HepG2 (cell line): ENCODE measurements at regions of chr1 and their contacts with region 1.

Region 1: DNA sequence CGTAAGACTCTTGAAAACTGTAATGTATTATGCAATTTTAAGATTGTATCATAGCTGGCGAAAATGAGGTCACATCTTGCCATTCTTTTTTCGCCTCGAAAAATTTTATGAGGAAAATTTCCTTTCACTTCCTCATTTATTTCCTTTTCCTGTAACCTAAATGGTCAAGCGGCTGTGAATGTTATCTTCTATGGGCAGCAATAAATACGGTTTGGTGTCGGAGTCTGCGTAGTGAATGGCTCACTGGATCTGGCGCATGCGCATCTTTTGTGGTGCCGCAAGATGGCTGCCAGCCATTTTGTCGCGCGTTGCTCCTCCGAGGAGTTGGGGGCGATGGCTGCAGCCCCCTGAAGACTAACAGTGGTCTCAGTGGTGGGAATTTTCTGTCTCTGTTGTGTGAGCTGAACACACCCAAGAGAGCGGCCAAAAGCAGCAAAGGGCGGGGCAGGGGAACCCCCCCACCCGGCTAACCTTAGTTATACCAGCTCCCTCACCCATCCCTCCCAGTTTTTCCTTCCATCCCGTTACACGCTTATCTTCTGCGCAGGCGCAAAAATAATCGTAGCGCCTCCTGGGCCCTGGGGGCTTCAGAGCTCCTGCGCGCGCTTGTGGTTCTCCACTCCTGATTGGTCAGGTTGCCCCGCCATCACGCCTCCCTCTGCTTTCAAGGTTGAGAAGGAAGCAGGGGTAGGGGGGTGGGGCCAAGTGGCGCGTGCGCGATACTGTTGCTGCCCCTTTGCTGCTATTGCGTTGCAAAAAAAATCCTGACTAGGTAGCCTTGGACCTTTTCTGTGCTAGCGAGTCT is at the start of gene RPRD2:
- DNase-seq: peak; percentile 99
- ATAC-seq: peak; percentile 95
- H3K4me3 ChIP-seq: peak within 1 kb of the TSS; percentile 75 to 97 (median 95)
- H3K27ac ChIP-seq: peak within 1 kb of the TSS; percentile 100
- H3K4me1 ChIP-seq: peaks cover 36% of the 10 kb centered on the region
- H3K27me3 ChIP-seq: no peaks in the 10 kb centered on the region; a peak in 1 of 5 replicates
- CTCF ChIP-seq: no peak
- EP300 ChIP-seq: no peak
- POLR2A ChIP-seq: peak; percentile 53 to 76
- RAD21 ChIP-seq: no peak; the same call in 1 of the 2 replicates
- total RNA-seq, gene RPRD2: 8.0 and 12.2 TPM in 2 replicates

Region 2: DNA sequence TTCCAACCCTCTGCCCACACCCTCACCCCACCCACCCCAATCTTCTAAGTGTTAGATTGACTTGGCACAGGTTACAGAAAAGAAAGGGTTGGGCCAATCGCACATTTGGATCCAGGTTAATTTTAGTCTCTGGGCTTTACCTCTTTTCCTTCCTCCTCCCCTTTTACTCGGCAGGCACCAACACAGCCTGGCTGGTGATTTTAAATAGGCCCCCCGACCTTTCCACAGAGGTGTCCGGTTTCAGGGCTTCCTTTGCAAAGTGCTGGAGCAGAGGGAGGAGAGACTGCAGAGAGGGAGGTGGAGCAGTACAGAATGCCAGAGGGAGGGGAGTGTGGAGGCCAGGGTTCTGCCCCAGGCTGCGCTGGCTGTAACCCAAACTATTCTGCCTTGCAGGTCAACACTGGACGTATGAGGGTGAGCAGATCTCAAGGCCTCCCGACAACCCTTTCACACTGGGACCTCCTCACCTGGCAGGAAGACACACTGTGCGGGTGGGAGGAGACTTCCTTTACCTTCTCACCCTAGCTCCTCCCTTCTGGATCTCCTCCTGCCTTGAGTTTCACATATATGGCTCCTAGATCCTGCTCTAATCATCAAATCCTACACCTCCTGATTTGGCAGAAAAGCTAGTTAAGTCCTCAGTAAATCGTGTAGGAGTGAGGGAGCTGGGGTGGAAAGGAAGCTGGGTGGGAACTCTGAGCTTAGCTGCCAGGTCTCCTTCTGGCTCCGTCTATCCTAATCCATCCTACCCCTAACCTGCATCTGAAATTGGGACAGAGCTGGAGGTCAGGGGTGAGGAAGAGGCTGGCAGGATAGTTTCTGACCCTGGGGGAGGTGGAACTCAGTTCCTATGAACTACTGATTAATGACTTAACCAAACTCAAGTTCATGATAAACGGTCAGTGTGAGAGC is 103.6 kb before region 1 on chr1:
- CTCF ChIA-PET with region 1: no interaction called
- POLR2A ChIA-PET with region 1: interaction called, 11 read pairs
- in situ Hi-C with region 1: no loop called
- intact Hi-C with region 1: no loop called
- DNase-seq: peak; percentile 79
- ATAC-seq: peak; percentile 78
- H3K4me3 ChIP-seq: peak overlapping the region; percentile 42 to 78 (median 53); a peak in 5 of 6 replicates
- H3K27ac ChIP-seq: peak overlapping the region; percentile 73
- H3K4me1 ChIP-seq: peaks cover 45% of the 10 kb centered on the region
- H3K27me3 ChIP-seq: no peaks in the 10 kb centered on the region; a peak in 1 of 5 replicates
- CTCF ChIP-seq: 0 out of 2 replicates have a peak, but pooled peaks have one; percentile 17
- EP300 ChIP-seq: peak in 1 of 2 experiments; percentile 26; a peak in 1 of 4 replicates
- POLR2A ChIP-seq: 0 out of 4 replicates have a peak, but pooled peaks of 1 of the 2 experiments have one; percentile 45
- RAD21 ChIP-seq: no peak

Region 3: GRCh38 chr1:150321826-150322166 is 41.8 kb before region 1 on chr1:
- CTCF ChIA-PET with region 1: no interaction called
- POLR2A ChIA-PET with region 1: interaction called, 25 read pairs
- in situ Hi-C with region 1: no loop called
- intact Hi-C with region 1: no loop called
- DNase-seq: no peak
- ATAC-seq: no peak
- H3K4me3 ChIP-seq: peak overlapping the region; percentile 83 to 92 (median 85)
- H3K27ac ChIP-seq: peak overlapping the region; percentile 84
- H3K4me1 ChIP-seq: peaks cover 20% of the 10 kb centered on the region
- H3K27me3 ChIP-seq: no peaks in the 10 kb centered on the region; a peak in 1 of 5 replicates
- CTCF ChIP-seq: no peak
- EP300 ChIP-seq: no peak
- POLR2A ChIP-seq: no peak
- RAD21 ChIP-seq: no peak

Region 4: DNA sequence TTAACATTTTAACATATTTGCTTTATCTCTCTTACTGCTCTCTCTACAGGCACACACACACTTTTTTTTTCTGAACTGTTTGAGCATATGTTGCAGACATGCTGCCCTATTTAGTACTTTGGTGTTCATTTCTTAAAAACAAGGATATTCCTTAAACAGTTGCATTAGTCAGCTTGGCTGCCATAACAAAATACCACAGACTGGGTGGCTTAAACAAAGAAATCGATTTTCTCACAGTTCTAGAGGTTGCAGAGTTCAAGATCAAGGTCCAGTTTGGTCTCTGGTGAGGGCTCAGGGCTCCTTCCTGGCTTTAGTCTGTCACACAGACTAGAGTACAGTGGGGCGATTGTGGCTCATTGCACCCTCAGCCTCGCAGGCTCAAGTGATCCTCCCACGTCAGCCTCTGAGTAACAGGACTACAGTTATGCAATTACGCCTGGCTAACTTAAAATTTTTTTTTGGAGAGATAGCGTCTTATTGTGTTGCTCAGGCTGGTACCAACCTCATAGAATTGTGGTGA is 47.0 kb after region 1 on chr1:
- CTCF ChIA-PET with region 1: no interaction called
- POLR2A ChIA-PET with region 1: interaction called, 27 read pairs
- in situ Hi-C with region 1: loop called (anchors 10 kb)
- intact Hi-C with region 1: loop called (anchors 2 kb)
- DNase-seq: peak; percentile 99
- ATAC-seq: peak; percentile 95
- H3K4me3 ChIP-seq: peak overlapping the region in 2 of 3 experiments; percentile 30 to 50; a peak in 3 of 6 replicates
- H3K27ac ChIP-seq: peak overlapping the region; percentile 75
- H3K4me1 ChIP-seq: peaks cover 66% of the 10 kb centered on the region
- H3K27me3 ChIP-seq: no peaks in the 10 kb centered on the region
- CTCF ChIP-seq: no peak
- EP300 ChIP-seq: peak; percentile 52 to 90; a peak in 3 of 4 replicates
- POLR2A ChIP-seq: no peak
- RAD21 ChIP-seq: 0 out of 2 replicates have a peak, but pooled peaks have one; percentile 24

Region 5: GRCh38 chr1:150515328-150516048 is 151.9 kb after region 1 on chr1 and contains the start of gene FALEC:
- CTCF ChIA-PET with region 1: no interaction called
- POLR2A ChIA-PET with region 1: interaction called, 11 read pairs
- in situ Hi-C with region 1: no loop called
- intact Hi-C with region 1: no loop called
- DNase-seq: peak; percentile 93
- ATAC-seq: peak; percentile 95
- H3K4me3 ChIP-seq: peak within 1 kb of the TSS; percentile 73 to 84 (median 80)
- H3K27ac ChIP-seq: peak within 1 kb of the TSS; percentile 82
- H3K4me1 ChIP-seq: peaks cover 32% of the 10 kb centered on the region
- H3K27me3 ChIP-seq: no peaks in the 10 kb centered on the region; a peak in 1 of 5 replicates
- CTCF ChIP-seq: no peak; the same call in 1 of the 2 replicates
- EP300 ChIP-seq: peak in 1 of 2 experiments; percentile 14; a peak in 1 of 4 replicates
- POLR2A ChIP-seq: peak; percentile 60 to 82
- RAD21 ChIP-seq: peak; percentile 13; the same call in 1 of the 2 replicates
- total RNA-seq, gene FALEC: 0.71 TPM in 1 of 2 replicates, not detected in the other